ENCODE measurements at regions of chr4 and their contacts with region 1.

Region 1: GRCh38 chr4:122542411-122543236 is 78.2 kb downstream of the IL21 start:
- DNase-seq: no peak
- H3K4me3 Mint-ChIP-seq: peak overlapping the region; percentile 62
- H3K27ac Mint-ChIP-seq: peak overlapping the region; percentile 97
- H3K4me1 Mint-ChIP-seq: peaks cover 93% of the 10 kb centered on the region
- H3K27me3 Mint-ChIP-seq: no peaks in the 10 kb centered on the region

Region 2: GRCh38 chr4:122151982-122152710 is 390.5 kb before region 1 on chr4 and contains the start of gene BLTP1:
- CTCF ChIA-PET with region 1: no interaction called
- POLR2A ChIA-PET with region 1: no interaction called
- intact Hi-C with region 1: loop called (anchors 5 kb)
- DNase-seq: peak; percentile 91
- H3K4me3 Mint-ChIP-seq: peak within 1 kb of the TSS; percentile 92
- H3K27ac Mint-ChIP-seq: peak within 1 kb of the TSS; percentile 93
- H3K4me1 Mint-ChIP-seq: peaks cover 51% of the 10 kb centered on the region
- H3K27me3 Mint-ChIP-seq: no peaks in the 10 kb centered on the region
- total RNA-seq, gene BLTP1: 26.6 to 30.7 TPM

Region 3: GRCh38 chr4:122259849-122260248 is 282.8 kb before region 1 on chr4:
- CTCF ChIA-PET with region 1: no interaction called
- POLR2A ChIA-PET with region 1: no interaction called
- intact Hi-C with region 1: no loop called
- DNase-seq: no peak
- H3K4me3 Mint-ChIP-seq: no peak overlapping the region
- H3K27ac Mint-ChIP-seq: no peak overlapping the region
- H3K4me1 Mint-ChIP-seq: no peaks in the 10 kb centered on the region
- H3K27me3 Mint-ChIP-seq: no peaks in the 10 kb centered on the region

Region 4: GRCh38 chr4:122508083-122508482 is 34.5 kb before region 1 on chr4:
- CTCF ChIA-PET with region 1: interaction called, 3 read pairs
- POLR2A ChIA-PET with region 1: interaction called, 8 read pairs
- intact Hi-C with region 1: loop called (anchors 1 kb)
- DNase-seq: no peak
- H3K4me3 Mint-ChIP-seq: peak overlapping the region; percentile 59
- H3K27ac Mint-ChIP-seq: peak overlapping the region; percentile 87
- H3K4me1 Mint-ChIP-seq: peaks cover 73% of the 10 kb centered on the region
- H3K27me3 Mint-ChIP-seq: no peaks in the 10 kb centered on the region

Region 5: GRCh38 chr4:122584519-122584918 is 41.9 kb after region 1 on chr4:
- CTCF ChIA-PET with region 1: no interaction called
- POLR2A ChIA-PET with region 1: interaction called, 4 read pairs
- intact Hi-C with region 1: loop called (anchors 1 kb)
- DNase-seq: peak; percentile 23
- H3K4me3 Mint-ChIP-seq: peak overlapping the region; percentile 21
- H3K27ac Mint-ChIP-seq: peak overlapping the region; percentile 88
- H3K4me1 Mint-ChIP-seq: peaks cover 46% of the 10 kb centered on the region
- H3K27me3 Mint-ChIP-seq: no peaks in the 10 kb centered on the region

Region 6: GRCh38 chr4:122658818-122659295 is 116.2 kb after region 1 on chr4:
- CTCF ChIA-PET with region 1: no interaction called
- POLR2A ChIA-PET with region 1: interaction called, 4 read pairs
- intact Hi-C with region 1: loop called (anchors 5 kb)
- DNase-seq: no peak
- H3K4me3 Mint-ChIP-seq: no peak overlapping the region
- H3K27ac Mint-ChIP-seq: peak overlapping the region; percentile 98
- H3K4me1 Mint-ChIP-seq: peaks cover 60% of the 10 kb centered on the region
- H3K27me3 Mint-ChIP-seq: no peaks in the 10 kb centered on the region

Region 7: GRCh38 chr4:122796801-122797404 is 254.3 kb after region 1 on chr4:
- CTCF ChIA-PET with region 1: no interaction called
- POLR2A ChIA-PET with region 1: no interaction called
- intact Hi-C with region 1: no loop called
- DNase-seq: no peak
- H3K4me3 Mint-ChIP-seq: no peak overlapping the region
- H3K27ac Mint-ChIP-seq: no peak overlapping the region
- H3K4me1 Mint-ChIP-seq: no peaks in the 10 kb centered on the region
- H3K27me3 Mint-ChIP-seq: no peaks in the 10 kb centered on the region